GM12878 (cell line): ENCODE measurements at regions of chr10 and their contacts with region 1.

Region 1: GRCh38 chr10:5840314-5841307 is 27.4 kb upstream of the GDI2 start:
- DNase-seq: peak; percentile 59
- ATAC-seq: peak; percentile 90
- H3K4me3 ChIP-seq: peak overlapping the region; percentile 28; the same call in 1 of the 2 replicates
- H3K27ac ChIP-seq: peak overlapping the region; percentile 83
- H3K4me1 ChIP-seq: peaks cover 42% of the 10 kb centered on the region
- H3K27me3 ChIP-seq: no peaks in the 10 kb centered on the region
- CTCF ChIP-seq: no peak
- EP300 ChIP-seq: peak; percentile 33 to 51; a peak in 2 of 4 replicates
- POLR2A ChIP-seq: peak; percentile 92
- RAD21 ChIP-seq: 0 out of 2 replicates have a peak, but pooled peaks have one; percentile 18

Region 2: GRCh38 chr10:5692461-5693358 is 147.9 kb before region 1 on chr10:
- CTCF ChIA-PET with region 1: interaction called, 6 read pairs
- POLR2A ChIA-PET with region 1: interaction called, 4 read pairs
- RAD21 ChIA-PET with region 1: interaction called, 11 read pairs
- SMC1A ChIA-PET with region 1: interaction called, 7 read pairs
- in situ Hi-C with region 1: no loop called
- intact Hi-C with region 1: no loop called
- DNase-seq: peak; percentile 32
- ATAC-seq: peak; percentile 90
- H3K4me3 ChIP-seq: peak overlapping the region; percentile 83
- H3K27ac ChIP-seq: peak overlapping the region; percentile 77
- H3K4me1 ChIP-seq: peaks cover 21% of the 10 kb centered on the region
- H3K27me3 ChIP-seq: no peaks in the 10 kb centered on the region
- CTCF ChIP-seq: 0 out of 6 replicates have a peak, but pooled peaks of 1 of the 3 experiments have one; percentile 5
- EP300 ChIP-seq: peak in 1 of 2 experiments; percentile 40; a peak in 1 of 4 replicates
- POLR2A ChIP-seq: peak; percentile 73
- RAD21 ChIP-seq: no peak

Region 3: GRCh38 chr10:5764422-5765297 is 76.0 kb before region 1 on chr10:
- CTCF ChIA-PET with region 1: no interaction called
- POLR2A ChIA-PET with region 1: no interaction called
- RAD21 ChIA-PET with region 1: no interaction called
- SMC1A ChIA-PET with region 1: no interaction called
- in situ Hi-C with region 1: no loop called
- intact Hi-C with region 1: no loop called
- DNase-seq: no peak
- ATAC-seq: peak; percentile 28; the same call in 2 of the 3 replicates
- H3K4me3 ChIP-seq: no peak overlapping the region
- H3K27ac ChIP-seq: no peak overlapping the region
- H3K4me1 ChIP-seq: no peaks in the 10 kb centered on the region
- H3K27me3 ChIP-seq: no peaks in the 10 kb centered on the region
- CTCF ChIP-seq: no peak; a peak in 1 of 6 replicates
- EP300 ChIP-seq: no peak
- POLR2A ChIP-seq: peak; percentile 59
- RAD21 ChIP-seq: no peak

Region 4: DNA sequence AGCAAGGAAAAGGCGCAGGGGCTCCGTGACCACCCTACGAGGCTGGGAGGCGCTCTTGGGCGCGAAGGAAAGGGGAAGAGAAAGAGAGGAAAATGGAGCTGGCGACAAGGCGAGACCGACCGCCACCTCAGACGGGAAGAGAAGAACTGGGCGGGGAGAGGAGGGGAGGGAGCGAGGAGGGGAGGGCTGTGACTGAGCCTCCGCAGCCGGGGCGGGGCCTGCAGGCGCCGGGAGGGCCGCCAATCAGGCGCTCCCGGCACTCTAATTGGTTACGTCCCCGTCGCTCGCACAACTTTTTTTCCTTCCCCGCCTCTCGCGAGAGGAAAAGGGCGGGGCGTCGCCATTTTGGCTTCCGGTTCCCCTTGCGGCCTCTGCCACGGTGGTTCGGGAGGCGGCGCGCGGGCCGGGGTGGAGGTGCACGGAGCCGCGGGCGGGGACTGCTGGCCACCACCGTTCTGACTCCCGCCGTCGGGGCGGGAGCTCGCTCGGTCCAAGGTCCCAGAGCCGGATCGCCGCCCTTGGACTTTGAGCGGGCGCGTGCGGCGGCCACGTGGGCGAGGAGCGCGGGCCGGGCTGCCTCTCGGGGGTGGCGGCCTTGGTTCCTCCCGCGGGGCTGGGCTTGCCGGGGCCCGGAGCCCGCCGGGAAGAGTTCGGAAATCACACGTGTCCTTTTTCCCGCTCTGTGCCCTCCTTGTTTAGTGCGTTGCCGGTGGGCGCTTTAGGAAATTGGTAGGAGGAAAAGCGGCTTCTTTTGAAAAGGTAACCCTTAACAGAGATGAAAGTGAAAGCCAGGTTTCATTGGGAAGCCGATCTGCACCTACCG is 27.1 kb before region 1 on chr10 and contains the start of gene GDI2:
- CTCF ChIA-PET with region 1: interaction called, 74 read pairs
- POLR2A ChIA-PET with region 1: interaction called, 46 read pairs
- RAD21 ChIA-PET with region 1: interaction called, 183 read pairs
- SMC1A ChIA-PET with region 1: interaction called, 54 read pairs
- in situ Hi-C with region 1: no loop called
- intact Hi-C with region 1: no loop called
- DNase-seq: peak; percentile 82
- ATAC-seq: peak; percentile 85
- H3K4me3 ChIP-seq: peak within 1 kb of the TSS; percentile 91
- H3K27ac ChIP-seq: peak within 1 kb of the TSS; percentile 97
- H3K4me1 ChIP-seq: peaks cover 41% of the 10 kb centered on the region
- H3K27me3 ChIP-seq: no peaks in the 10 kb centered on the region
- CTCF ChIP-seq: peak in 1 of 3 experiments; percentile 8; a peak in 1 of 6 replicates
- EP300 ChIP-seq: no peak
- POLR2A ChIP-seq: peak; percentile 90
- RAD21 ChIP-seq: no peak
- polyA plus RNA-seq, gene GDI2: 264 to 334 TPM

Region 5: DNA sequence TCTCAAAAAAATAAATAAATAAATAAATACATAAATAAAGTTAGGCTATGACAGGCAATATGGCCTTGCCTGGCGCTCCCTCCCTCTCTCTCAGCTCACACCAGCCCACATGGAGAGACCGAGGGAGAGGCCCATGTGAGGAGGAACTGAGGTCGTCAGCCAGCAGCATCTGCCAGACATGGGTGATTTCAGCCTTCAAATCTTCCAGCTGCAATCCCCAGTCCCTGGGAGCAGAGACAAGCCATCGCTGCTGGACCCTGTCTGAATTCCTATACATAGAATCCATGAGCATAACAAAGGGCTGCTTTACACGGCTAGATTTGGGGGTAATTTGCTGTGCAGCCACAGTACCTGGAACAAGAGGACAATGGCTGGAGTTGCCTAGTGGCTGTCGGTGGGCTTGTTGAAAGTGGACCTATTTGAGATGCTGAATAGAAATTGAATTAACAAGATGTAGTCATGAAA is 13.5 kb after region 1 on chr10:
- CTCF ChIA-PET with region 1: interaction called, 25 read pairs
- POLR2A ChIA-PET with region 1: interaction called, 69 read pairs
- RAD21 ChIA-PET with region 1: interaction called, 107 read pairs
- SMC1A ChIA-PET with region 1: interaction called, 77 read pairs
- in situ Hi-C with region 1: no loop called
- intact Hi-C with region 1: no loop called
- DNase-seq: no peak
- ATAC-seq: no peak
- H3K4me3 ChIP-seq: no peak overlapping the region
- H3K27ac ChIP-seq: no peak overlapping the region
- H3K4me1 ChIP-seq: peaks cover 8% of the 10 kb centered on the region
- H3K27me3 ChIP-seq: no peaks in the 10 kb centered on the region; a peak in 1 of 4 replicates
- CTCF ChIP-seq: no peak
- EP300 ChIP-seq: no peak
- POLR2A ChIP-seq: no peak
- RAD21 ChIP-seq: no peak

Region 6: DNA sequence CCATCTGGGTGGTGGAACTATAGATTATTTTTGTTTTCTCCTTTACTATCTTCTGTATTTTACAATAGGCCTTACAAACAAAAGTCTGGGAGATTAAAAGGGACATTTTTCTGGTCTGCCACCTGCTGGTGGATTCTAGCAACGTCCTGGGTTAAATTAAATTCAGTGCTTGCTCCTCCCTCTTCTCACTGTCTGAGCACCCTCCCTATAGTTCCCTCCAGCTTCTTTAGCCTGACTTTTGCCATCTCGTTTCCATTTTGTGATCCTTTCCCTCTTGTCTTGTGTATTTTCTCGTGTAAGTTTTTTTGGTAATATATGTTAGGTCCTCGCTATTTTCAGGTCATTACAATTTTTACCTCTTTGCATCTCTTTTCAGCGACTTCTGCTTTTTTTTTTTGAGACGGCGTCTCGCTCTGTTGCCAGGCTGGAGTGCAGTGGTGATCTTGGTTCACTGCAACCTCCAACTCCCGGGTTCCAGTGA is 32.9 kb after region 1 on chr10:
- CTCF ChIA-PET with region 1: interaction called, 30 read pairs
- POLR2A ChIA-PET with region 1: interaction called, 6 read pairs
- RAD21 ChIA-PET with region 1: interaction called, 23 read pairs
- SMC1A ChIA-PET with region 1: interaction called, 28 read pairs
- in situ Hi-C with region 1: no loop called
- intact Hi-C with region 1: no loop called
- DNase-seq: peak; percentile 59
- ATAC-seq: peak; percentile 98
- H3K4me3 ChIP-seq: peak overlapping the region; percentile 26; the same call in 1 of the 2 replicates
- H3K27ac ChIP-seq: 0 out of 2 replicates have a peak overlapping the region, but pooled peaks have one; percentile 18
- H3K4me1 ChIP-seq: peaks cover 3% of the 10 kb centered on the region
- H3K27me3 ChIP-seq: no peaks in the 10 kb centered on the region
- CTCF ChIP-seq: peak; percentile 64 to 73 (median 66)
- EP300 ChIP-seq: no peak
- POLR2A ChIP-seq: no peak
- RAD21 ChIP-seq: peak; percentile 71

Region 7: GRCh38 chr10:5977471-5978229 is 137.0 kb after region 1 on chr10 and contains the start of gene IL15RA:
- CTCF ChIA-PET with region 1: interaction called, 5 read pairs
- POLR2A ChIA-PET with region 1: no interaction called
- RAD21 ChIA-PET with region 1: interaction called, 8 read pairs
- SMC1A ChIA-PET with region 1: interaction called, 7 read pairs
- in situ Hi-C with region 1: no loop called
- intact Hi-C with region 1: loop called (anchors 5 kb)
- DNase-seq: no peak
- ATAC-seq: peak; percentile 78
- H3K4me3 ChIP-seq: peak within 1 kb of the TSS; percentile 95
- H3K27ac ChIP-seq: peak within 1 kb of the TSS; percentile 88
- H3K4me1 ChIP-seq: peaks cover 12% of the 10 kb centered on the region
- H3K27me3 ChIP-seq: no peaks in the 10 kb centered on the region; a peak in 1 of 4 replicates
- CTCF ChIP-seq: peak; percentile 22 to 54 (median 30); a peak in 5 of 6 replicates
- EP300 ChIP-seq: no peak
- POLR2A ChIP-seq: peak; percentile 65
- RAD21 ChIP-seq: peak; percentile 21; the same call in 1 of the 2 replicates
- polyA plus RNA-seq, gene IL15RA: 2.0 to 4.2 TPM